Mammary epithelial cell (primary cell): ENCODE measurements at regions of chr14 and their contacts with region 1.

Region 1: GRCh38 chr14:65446159-65446558 is 33.6 kb downstream of the FUT8 start:
- DNase-seq: peak; percentile 23
- H3K4me3 ChIP-seq: no peak overlapping the region
- H3K27ac ChIP-seq: no peak overlapping the region
- H3K4me1 ChIP-seq: peaks cover 4% of the 10 kb centered on the region
- H3K27me3 ChIP-seq: no peaks in the 10 kb centered on the region
- CTCF ChIP-seq: no peak

Region 2: DNA sequence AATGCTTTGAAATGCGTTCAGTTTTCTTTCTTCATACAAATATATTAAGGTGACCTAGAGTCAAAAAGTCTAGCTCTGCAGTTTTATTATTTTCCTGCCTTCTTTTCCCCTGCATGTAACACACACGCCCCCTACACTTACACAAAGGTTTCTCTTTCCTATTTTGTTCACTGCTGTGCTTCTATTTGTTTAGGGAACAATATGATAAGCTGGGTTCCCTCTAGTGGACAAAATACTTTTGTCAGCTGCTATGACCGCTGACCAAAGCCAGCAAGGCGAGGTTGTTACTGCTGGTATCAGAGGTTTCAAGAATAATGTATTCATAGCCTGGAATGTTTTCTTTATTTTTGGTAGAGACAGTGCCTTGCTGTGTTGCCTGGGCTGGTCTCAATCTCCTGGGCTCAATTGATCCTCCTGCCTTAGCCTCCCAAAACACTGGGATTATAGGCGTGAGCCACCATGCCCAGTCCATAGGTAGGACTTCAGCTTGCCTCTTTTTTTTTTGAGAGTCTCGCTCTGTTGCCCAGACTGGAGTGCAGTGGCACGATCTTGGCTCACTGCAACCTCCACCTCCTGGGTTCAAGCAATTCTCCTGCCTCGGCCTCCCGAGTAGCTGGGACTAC is 426.1 kb before region 1 on chr14:
- CTCF ChIA-PET with region 1: no interaction called
- dilution Hi-C with region 1: no loop called
- in situ Hi-C with region 1: no loop called
- intact Hi-C with region 1: no loop called
- DNase-seq: peak; percentile 62
- H3K4me3 ChIP-seq: no peak overlapping the region
- H3K27ac ChIP-seq: no peak overlapping the region
- H3K4me1 ChIP-seq: no peaks in the 10 kb centered on the region
- H3K27me3 ChIP-seq: no peaks in the 10 kb centered on the region
- CTCF ChIP-seq: peak; percentile 64 to 68

Region 3: DNA sequence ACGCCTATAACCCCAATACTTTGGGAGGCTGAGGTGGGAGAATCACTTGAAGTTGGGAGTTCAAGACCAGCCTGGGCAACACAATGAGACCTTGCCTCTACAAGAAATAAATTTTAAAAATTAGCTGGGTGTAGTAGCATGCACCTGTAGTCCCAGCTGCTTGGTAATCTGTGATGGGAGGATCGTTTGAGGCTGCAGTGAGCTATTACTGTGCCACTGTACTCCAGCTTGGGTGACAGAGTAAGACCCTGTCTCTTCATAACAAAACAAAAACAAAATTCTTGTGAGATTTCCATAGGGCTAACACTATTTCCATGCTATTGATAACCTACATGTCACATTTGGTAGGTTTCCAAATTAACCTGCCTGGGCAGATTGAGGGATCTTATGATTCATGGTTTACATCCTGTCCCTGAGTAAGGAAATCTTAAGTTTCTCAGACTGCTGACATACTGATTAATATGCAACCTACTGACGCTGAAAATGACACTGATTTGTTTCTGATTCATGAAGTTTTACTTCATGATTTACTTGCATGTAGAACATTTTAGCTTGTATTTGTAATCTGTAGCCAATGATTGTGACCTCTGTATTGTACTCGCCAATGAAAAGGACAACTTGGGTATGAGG is 1897.6 kb after region 1 on chr14:
- CTCF ChIA-PET with region 1: interaction called, 11 read pairs
- dilution Hi-C with region 1: no loop called
- in situ Hi-C with region 1: no loop called
- intact Hi-C with region 1: no loop called
- DNase-seq: peak; percentile 84
- H3K4me3 ChIP-seq: no peak overlapping the region
- H3K27ac ChIP-seq: peak overlapping the region; percentile 72
- H3K4me1 ChIP-seq: peaks cover 20% of the 10 kb centered on the region
- H3K27me3 ChIP-seq: no peaks in the 10 kb centered on the region
- CTCF ChIP-seq: no peak